Ascending aorta (tissue), 2 donors: ENCODE measurements at regions of chr7 and their contacts with region 1.

Region 1: DNA sequence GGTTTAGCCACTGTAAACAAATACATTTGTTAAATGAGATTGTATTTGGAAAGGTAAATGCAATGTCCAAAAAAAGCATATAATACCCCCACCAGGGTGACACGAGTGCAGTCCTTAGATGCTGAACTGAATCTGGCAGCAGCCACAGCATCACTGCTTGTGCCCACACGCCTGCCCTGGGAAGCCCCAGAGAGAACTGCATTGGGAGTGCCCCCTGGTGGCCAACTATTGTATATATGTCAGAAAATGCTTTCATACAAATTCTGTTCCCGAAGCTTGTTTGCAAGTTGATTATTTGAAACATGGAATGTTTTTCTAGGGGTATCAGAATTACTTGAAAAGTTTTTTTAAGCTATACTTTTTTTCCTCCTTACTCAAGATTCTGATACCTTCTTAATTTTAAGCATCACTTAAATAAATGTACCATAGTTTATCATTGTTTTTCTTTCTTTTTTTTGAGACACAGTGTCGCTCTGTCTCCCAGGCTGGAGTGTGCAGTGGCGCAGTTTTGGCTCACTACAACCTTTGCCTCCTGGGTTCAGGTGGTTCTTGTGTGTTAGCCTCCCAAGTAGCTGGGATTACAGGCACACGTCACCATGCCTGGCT is 50.1 kb downstream of the LANCL2 start:
- DNase-seq: peak in 1 of 2 donors; percentile 82
- H3K4me3 ChIP-seq: no peak overlapping the region
- H3K27ac ChIP-seq: no peak overlapping the region
- H3K4me1 ChIP-seq: no peaks in the 10 kb centered on the region
- H3K27me3 ChIP-seq: no peaks in the 10 kb centered on the region
- CTCF ChIP-seq: peak; percentile 41 to 82 (median 79)

Region 2: GRCh38 chr7:54773472-54774399 is 641.5 kb before region 1 on chr7:
- intact Hi-C with region 1: loop called (anchors 2 kb)
- DNase-seq: peak in 1 of 2 donors; percentile 88
- H3K4me3 ChIP-seq: peak overlapping the region; percentile 41 to 57
- H3K27ac ChIP-seq: no peak overlapping the region
- H3K4me1 ChIP-seq: peaks cover 0 to 3% of the 10 kb centered on the region in 2 donors
- H3K27me3 ChIP-seq: no peaks in the 10 kb centered on the region
- CTCF ChIP-seq: peak; percentile 72 to 87 (median 83)

Region 3: DNA sequence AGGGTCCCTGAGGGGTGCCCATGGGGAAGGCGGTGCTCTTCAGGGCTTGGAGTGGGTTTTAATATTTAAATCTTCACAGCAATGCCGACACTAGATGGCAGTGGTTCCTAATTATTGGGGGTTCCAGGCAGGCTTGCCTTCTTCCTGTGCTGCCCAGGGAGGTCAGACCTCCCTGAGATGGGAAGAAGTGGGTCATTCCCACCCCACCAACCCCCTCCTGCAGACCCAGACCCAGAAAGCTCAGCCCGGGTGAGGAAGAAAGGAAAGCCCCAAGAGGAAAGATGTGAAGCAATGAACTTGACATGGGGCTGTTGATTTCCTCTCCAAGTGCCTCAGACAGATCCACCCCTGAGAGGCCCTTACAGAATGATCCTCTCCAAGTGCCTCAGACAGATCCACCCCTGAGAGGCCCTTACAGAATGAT is 135.2 kb before region 1 on chr7:
- intact Hi-C with region 1: loop called (anchors 1 kb)
- DNase-seq: peak in 1 of 2 donors; percentile 67
- H3K4me3 ChIP-seq: no peak overlapping the region
- H3K27ac ChIP-seq: no peak overlapping the region
- H3K4me1 ChIP-seq: no peaks in the 10 kb centered on the region
- H3K27me3 ChIP-seq: no peaks in the 10 kb centered on the region
- CTCF ChIP-seq: peak; percentile 40 to 67 (median 45)